Activated T-helper 1 cell treated with anti-CD3 and anti-CD28 coated beads, Interleukin-12 subunit alpha, Interleukin-12 subunit beta, Interleukin-2, Interleukin-4 antibody, amounts not matched to agents 30 ng/mL and 10 ng/mL and 1 ng/mL, durations not matched to agents 14 hours and 24 hours and 36 hours (primary cell): ENCODE measurements at regions of chr13 and their contacts with region 1.

Region 1: DNA sequence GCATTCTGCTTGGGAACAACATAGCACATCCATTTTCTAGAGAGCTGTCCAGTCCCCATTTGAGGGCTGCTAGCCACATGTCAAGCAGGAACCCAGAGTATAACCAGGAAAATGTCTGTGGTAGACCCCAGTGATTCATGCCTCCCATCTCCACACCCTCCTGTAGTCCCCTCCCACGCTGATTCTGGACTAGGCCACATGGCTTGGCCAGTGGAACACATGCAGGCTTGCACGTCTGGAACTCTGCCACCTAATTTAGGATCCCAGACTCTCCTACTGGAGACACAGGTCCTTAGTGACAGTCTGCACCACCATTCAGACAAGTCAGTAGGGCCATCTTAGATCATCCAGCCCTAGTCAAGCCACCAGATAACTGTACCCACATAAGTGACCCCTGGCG is 149.8 kb downstream of the ZIC5 start:
- DNase-seq: no peak
- H3K4me3 Mint-ChIP-seq: no peak overlapping the region
- H3K27ac Mint-ChIP-seq: no peak overlapping the region
- H3K4me1 Mint-ChIP-seq: peaks cover 18% of the 10 kb centered on the region
- H3K27me3 Mint-ChIP-seq: peaks cover 14% of the 10 kb centered on the region

Region 2: GRCh38 chr13:99805361-99805760 is 16.4 kb before region 1 on chr13:
- intact Hi-C with region 1: no loop called
- DNase-seq: no peak
- H3K4me3 Mint-ChIP-seq: no peak overlapping the region
- H3K27ac Mint-ChIP-seq: no peak overlapping the region
- H3K4me1 Mint-ChIP-seq: no peaks in the 10 kb centered on the region
- H3K27me3 Mint-ChIP-seq: peaks cover 3% of the 10 kb centered on the region

Region 3: GRCh38 chr13:99847318-99847750 is 25.6 kb after region 1 on chr13:
- intact Hi-C with region 1: no loop called
- DNase-seq: no peak
- H3K4me3 Mint-ChIP-seq: no peak overlapping the region
- H3K27ac Mint-ChIP-seq: no peak overlapping the region
- H3K4me1 Mint-ChIP-seq: no peaks in the 10 kb centered on the region
- H3K27me3 Mint-ChIP-seq: peaks cover 23% of the 10 kb centered on the region

Region 4: DNA sequence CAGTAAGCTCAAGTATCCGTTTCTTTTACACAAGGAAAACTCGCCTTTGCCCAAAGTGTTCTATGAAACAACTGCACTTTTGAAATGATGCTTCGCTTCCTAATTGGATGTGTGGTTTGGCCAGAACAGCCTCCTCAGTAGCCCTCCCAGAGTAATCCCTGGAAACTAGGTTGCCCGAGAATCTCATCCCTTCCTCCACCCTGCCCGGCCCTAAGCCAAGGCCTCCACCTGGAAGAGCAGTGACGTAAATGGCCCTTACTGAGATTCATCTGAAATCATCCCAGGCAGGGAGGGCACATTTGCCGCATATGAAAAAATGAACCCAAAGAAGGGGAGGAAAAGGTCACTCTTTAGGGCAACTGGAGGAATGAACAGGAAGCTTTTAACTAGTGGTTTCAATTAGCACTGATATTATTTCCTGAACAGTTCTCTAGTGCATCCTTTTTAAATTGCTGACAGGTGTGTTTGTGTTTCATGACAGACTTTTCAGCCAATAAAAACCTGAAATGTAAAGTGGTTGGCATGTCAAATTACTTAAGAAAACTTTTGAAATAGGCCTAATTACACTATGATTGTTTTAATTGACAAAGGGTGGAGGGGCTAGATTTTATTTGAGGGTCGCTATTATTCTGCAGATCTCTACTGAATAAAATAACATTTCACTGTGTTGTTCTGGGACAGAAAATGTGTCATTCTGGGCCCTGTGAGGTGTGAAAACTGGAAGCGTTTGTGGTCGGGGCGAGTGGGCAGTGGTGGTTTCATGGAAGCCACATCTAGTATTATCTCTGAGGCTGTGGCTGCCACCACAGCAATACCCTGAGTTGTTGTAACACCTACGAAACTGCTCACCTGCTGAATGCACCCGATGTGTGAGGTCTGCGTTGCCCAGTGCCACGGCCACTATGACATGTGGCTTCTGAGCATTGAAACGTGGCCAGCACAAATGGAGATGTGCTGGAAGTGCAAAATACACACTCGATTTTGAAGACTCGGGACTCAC is 37.7 kb after region 1 on chr13:
- intact Hi-C with region 1: loop called (anchors 1 kb)
- DNase-seq: peak; percentile 12
- H3K4me3 Mint-ChIP-seq: no peak overlapping the region
- H3K27ac Mint-ChIP-seq: peak overlapping the region; percentile 76
- H3K4me1 Mint-ChIP-seq: peaks cover 13% of the 10 kb centered on the region
- H3K27me3 Mint-ChIP-seq: peaks cover 64% of the 10 kb centered on the region

Region 5: GRCh38 chr13:99895223-99895994 is 73.7 kb after region 1 on chr13:
- intact Hi-C with region 1: no loop called
- DNase-seq: no peak
- H3K4me3 Mint-ChIP-seq: peak overlapping the region; percentile 79
- H3K27ac Mint-ChIP-seq: peak overlapping the region; percentile 41
- H3K4me1 Mint-ChIP-seq: peaks cover 15% of the 10 kb centered on the region
- H3K27me3 Mint-ChIP-seq: peaks cover 61% of the 10 kb centered on the region

Region 6: DNA sequence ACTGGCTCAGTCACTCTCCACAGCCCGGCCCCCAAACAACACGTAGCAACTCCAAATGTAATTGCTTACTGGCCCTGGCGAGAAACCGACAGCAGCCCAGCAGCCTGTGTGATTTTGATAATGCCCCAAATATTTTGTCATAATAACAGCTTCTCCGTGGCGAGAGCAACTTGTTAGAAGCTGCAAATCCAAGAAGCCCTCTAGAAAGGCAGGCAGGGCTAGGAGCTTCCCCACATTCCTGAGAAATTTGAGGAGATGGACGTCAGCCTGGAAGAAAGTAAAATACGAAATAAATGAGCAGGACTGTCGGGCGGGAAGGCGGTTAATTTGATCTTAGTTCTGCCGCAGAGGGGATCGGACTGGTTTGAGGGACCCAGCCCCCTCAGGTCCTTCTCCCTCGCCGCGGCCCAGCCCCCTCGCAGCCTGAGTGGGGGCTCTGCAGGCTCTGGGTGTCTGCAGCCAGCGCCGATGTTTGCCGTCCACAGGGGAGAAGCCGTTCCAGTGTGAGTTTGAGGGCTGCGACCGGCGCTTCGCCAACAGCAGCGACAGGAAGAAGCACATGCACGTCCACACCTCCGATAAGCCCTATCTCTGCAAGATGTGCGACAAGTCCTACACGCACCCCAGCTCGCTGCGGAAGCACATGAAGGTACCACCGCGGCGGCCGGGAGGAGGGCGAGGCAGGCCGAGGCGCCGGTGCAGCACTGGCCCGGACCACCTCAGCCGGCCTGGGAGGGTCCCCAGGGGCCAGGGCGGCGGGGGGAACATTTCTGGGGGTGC is 162.9 kb after region 1 on chr13:
- intact Hi-C with region 1: no loop called
- DNase-seq: no peak
- H3K4me3 Mint-ChIP-seq: no peak overlapping the region
- H3K27ac Mint-ChIP-seq: peak overlapping the region; percentile 67
- H3K4me1 Mint-ChIP-seq: peaks cover 10% of the 10 kb centered on the region
- H3K27me3 Mint-ChIP-seq: peaks cover 60% of the 10 kb centered on the region